ENCODE measurements at regions of chr3 and their contacts with region 1.

Region 1: DNA sequence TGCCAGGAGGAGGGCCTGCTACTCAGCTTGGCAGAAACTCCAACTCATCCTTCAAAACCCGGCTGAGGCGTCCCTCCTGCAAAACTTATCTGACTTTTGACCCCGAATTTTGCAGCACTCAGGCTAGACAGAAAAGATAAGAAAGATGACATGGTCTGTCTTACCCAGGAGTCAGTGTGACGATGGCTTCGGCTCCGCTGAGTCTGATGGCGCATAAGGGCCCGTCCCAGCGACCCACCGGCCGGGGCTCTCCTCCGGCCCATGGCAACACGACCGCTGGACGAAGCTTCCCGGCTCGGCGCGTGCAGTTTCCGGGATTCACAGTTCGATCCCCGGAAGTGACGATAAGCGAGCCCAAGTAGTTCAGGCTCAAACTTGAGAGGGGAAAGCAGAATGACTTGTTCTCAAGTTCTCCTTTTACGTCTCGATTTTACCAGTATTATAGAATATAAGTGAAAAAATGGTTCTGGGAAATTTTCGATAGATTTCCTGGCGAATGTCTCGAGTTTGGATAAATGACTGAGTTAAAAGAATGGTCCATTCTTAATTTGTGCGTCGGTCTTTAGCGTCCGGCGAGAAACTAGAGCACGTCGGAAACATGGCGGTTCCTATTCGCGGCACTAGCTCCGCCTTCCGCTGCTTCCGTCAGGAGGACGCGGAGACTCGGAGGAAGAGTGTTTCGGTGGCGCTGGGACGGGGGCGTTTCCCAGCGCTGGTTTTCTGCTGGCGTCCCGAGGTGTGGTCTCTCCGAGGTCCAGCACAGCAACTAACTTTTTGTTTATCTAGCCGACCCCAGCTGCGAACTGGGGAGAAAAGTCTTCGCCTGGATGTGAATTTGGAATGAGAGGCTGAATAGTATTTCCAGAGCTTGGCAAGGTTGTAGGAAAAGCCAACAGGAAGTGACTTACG is at the start of gene LSG1:
- DNase-seq: peak; percentile 89
- H3K4me3 ChIP-seq: peak within 1 kb of the TSS; percentile 94 to 95
- H3K27ac ChIP-seq: peak within 1 kb of the TSS; percentile 83 to 92
- H3K4me1 ChIP-seq: peaks cover 10 to 12% of the 10 kb centered on the region in 2 experiments; a peak in 3 of 4 replicates
- H3K27me3 ChIP-seq: no peaks in the 10 kb centered on the region
- CTCF ChIP-seq: no peak
- EP300 ChIP-seq: peak; percentile 18 to 57; a peak in 1 of 4 replicates
- RAD21 ChIP-seq: no peak
- polyA plus RNA-seq, gene LSG1: 35.1 and 43.7 TPM in 2 replicates

Region 2: GRCh38 chr3:194617827-194618226 is 54.3 kb before region 1 on chr3:
- CTCF ChIA-PET with region 1: no interaction called
- POLR2A ChIA-PET with region 1: no interaction called
- DNase-seq: no peak
- H3K4me3 ChIP-seq: no peak overlapping the region
- H3K27ac ChIP-seq: no peak overlapping the region
- H3K4me1 ChIP-seq: no peaks in the 10 kb centered on the region
- H3K27me3 ChIP-seq: no peaks in the 10 kb centered on the region
- CTCF ChIP-seq: no peak
- EP300 ChIP-seq: no peak
- RAD21 ChIP-seq: no peak

Region 3: DNA sequence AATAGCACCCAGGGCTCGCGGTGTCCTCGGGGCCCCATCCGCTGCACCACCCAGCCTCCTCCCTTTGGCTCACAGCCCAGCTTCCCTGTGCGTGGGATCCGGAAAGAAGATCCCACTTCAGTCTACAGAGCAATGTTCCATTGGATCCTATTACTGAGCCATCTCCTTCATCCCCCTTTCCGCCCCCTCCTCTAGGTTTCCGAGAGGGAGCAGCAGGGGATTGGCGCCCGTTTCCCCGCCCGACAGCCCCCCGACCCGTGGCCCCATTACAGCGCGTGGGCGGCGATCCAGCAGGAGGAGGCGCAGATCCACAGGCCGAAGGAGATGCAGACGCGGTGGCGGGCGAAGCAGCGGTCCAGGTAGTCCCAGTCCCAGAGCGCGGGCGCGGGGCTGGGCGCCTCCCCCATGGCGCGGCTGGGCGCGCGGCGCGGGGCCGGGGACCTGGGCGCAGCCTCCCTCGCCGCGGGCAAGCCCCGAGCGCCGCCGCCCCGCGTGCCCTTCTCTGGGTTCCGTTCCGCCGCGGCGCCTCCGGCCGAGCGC is 39.3 kb before region 1 on chr3:
- CTCF ChIA-PET with region 1: interaction called, 16 read pairs
- POLR2A ChIA-PET with region 1: interaction called, 4 read pairs
- DNase-seq: no peak
- H3K4me3 ChIP-seq: peak overlapping the region; percentile 82 to 84
- H3K27ac ChIP-seq: peak overlapping the region; percentile 76 to 91
- H3K4me1 ChIP-seq: peaks cover 0 to 6% of the 10 kb centered on the region in 2 experiments; a peak in 1 of 4 replicates
- H3K27me3 ChIP-seq: no peaks in the 10 kb centered on the region
- CTCF ChIP-seq: no peak
- EP300 ChIP-seq: no peak; a peak in 1 of 4 replicates
- RAD21 ChIP-seq: no peak

Region 4: DNA sequence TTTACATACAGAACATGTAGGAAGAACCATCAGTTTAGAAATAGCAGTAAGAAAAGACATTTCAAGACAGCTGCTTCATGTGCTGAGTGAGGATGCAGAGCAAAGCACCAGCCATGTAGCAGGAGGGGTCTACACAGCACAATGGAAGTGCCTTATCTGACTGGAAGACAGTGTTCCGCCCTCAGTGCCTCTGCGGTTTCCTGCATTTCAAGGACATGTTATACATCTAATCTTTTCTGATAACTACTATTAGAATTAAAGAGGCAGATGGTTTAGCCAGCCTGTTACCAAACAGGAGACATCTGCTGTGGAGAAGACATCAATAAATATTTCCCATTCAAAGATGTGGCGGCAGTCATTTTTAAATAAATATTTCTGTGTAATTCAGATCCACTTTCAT is 10.8 kb before region 1 on chr3:
- CTCF ChIA-PET with region 1: interaction called, 30 read pairs
- POLR2A ChIA-PET with region 1: no interaction called
- DNase-seq: no peak
- H3K4me3 ChIP-seq: no peak overlapping the region
- H3K27ac ChIP-seq: no peak overlapping the region
- H3K4me1 ChIP-seq: no peaks in the 10 kb centered on the region
- H3K27me3 ChIP-seq: no peaks in the 10 kb centered on the region
- CTCF ChIP-seq: no peak
- EP300 ChIP-seq: no peak
- RAD21 ChIP-seq: no peak

Region 5: GRCh38 chr3:195259475-195260279 is 587.5 kb after region 1 on chr3:
- CTCF ChIA-PET with region 1: interaction called, 18 read pairs
- POLR2A ChIA-PET with region 1: interaction called, 4 read pairs
- DNase-seq: peak; percentile 98
- H3K4me3 ChIP-seq: peak overlapping the region; percentile 63 to 72
- H3K27ac ChIP-seq: peak overlapping the region; percentile 83 to 97
- H3K4me1 ChIP-seq: peaks cover 18 to 57% of the 10 kb centered on the region in 2 experiments
- H3K27me3 ChIP-seq: no peaks in the 10 kb centered on the region
- CTCF ChIP-seq: peak; percentile 40
- EP300 ChIP-seq: peak in 1 of 2 experiments; percentile 45; a peak in 1 of 4 replicates
- RAD21 ChIP-seq: peak; percentile 65